AG04450 (cell line): ENCODE measurements at regions of chr11 and their contacts with region 1.

Region 1: GRCh38 chr11:73478738-73479347 is 102.6 kb downstream of the RELT start:
- DNase-seq: no peak
- H3K4me3 ChIP-seq: no peak overlapping the region
- H3K27ac ChIP-seq: no peak overlapping the region
- H3K27me3 ChIP-seq: no peaks in the 10 kb centered on the region
- CTCF ChIP-seq: peak; percentile 94

Region 2: GRCh38 chr11:72814286-72815109 is 664.3 kb before region 1 on chr11 and contains the start of gene ATG16L2:
- CTCF ChIA-PET with region 1: no interaction called
- POLR2A ChIA-PET with region 1: no interaction called
- DNase-seq: no peak
- H3K4me3 ChIP-seq: peak within 1 kb of the TSS; percentile 87
- H3K27ac ChIP-seq: peak within 1 kb of the TSS; percentile 96
- H3K27me3 ChIP-seq: no peaks in the 10 kb centered on the region
- CTCF ChIP-seq: no peak
- polyA plus RNA-seq, gene ATG16L2: 4.2 and 5.3 TPM in 2 replicates

Region 3: GRCh38 chr11:73445980-73446379 is 32.9 kb before region 1 on chr11:
- CTCF ChIA-PET with region 1: interaction called, 16 read pairs
- POLR2A ChIA-PET with region 1: no interaction called
- DNase-seq: no peak
- H3K4me3 ChIP-seq: no peak overlapping the region
- H3K27ac ChIP-seq: no peak overlapping the region
- H3K27me3 ChIP-seq: no peaks in the 10 kb centered on the region
- CTCF ChIP-seq: no peak

Region 4: GRCh38 chr11:73463359-73463758 is 15.5 kb before region 1 on chr11:
- CTCF ChIA-PET with region 1: interaction called, 89 read pairs
- POLR2A ChIA-PET with region 1: interaction called, 3 read pairs
- DNase-seq: peak; percentile 26
- H3K4me3 ChIP-seq: no peak overlapping the region
- H3K27ac ChIP-seq: no peak overlapping the region
- H3K27me3 ChIP-seq: no peaks in the 10 kb centered on the region
- CTCF ChIP-seq: no peak

Region 5: DNA sequence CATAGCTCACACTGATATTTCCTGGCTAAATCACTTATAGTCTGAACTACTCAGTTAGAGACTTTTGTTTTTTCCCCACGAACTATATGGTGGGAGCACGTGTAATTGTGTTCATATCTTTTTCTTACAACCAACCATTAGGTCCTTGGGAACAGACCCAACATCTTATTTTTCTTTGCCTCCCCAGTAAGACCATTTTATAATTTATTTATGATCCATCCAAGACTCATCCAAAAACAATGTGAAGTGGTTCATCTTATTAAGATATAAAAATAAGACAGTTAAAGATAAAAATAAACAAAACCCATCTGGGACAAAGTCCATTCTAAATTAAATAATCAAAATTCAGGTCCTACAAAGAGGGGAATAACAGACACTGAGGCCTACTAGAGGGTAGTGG is 28.2 kb after region 1 on chr11:
- CTCF ChIA-PET with region 1: interaction called, 16 read pairs
- POLR2A ChIA-PET with region 1: interaction called, 6 read pairs
- DNase-seq: no peak
- H3K4me3 ChIP-seq: no peak overlapping the region
- H3K27ac ChIP-seq: no peak overlapping the region
- H3K27me3 ChIP-seq: no peaks in the 10 kb centered on the region
- CTCF ChIP-seq: no peak

Region 6: GRCh38 chr11:73661035-73661628 is 182.3 kb after region 1 on chr11:
- CTCF ChIA-PET with region 1: interaction called, 66 read pairs
- POLR2A ChIA-PET with region 1: no interaction called
- DNase-seq: peak; percentile 49
- H3K4me3 ChIP-seq: peak overlapping the region; percentile 55
- H3K27ac ChIP-seq: peak overlapping the region; percentile 11
- H3K27me3 ChIP-seq: no peaks in the 10 kb centered on the region
- CTCF ChIP-seq: peak; percentile 98

Region 7: GRCh38 chr11:73818846-73819245 is 340.0 kb after region 1 on chr11:
- CTCF ChIA-PET with region 1: no interaction called
- POLR2A ChIA-PET with region 1: no interaction called
- DNase-seq: no peak
- H3K4me3 ChIP-seq: no peak overlapping the region
- H3K27ac ChIP-seq: no peak overlapping the region
- H3K27me3 ChIP-seq: no peaks in the 10 kb centered on the region
- CTCF ChIP-seq: no peak